ENCODE measurements at regions of chr15 and their contacts with region 1.

Region 1: DNA sequence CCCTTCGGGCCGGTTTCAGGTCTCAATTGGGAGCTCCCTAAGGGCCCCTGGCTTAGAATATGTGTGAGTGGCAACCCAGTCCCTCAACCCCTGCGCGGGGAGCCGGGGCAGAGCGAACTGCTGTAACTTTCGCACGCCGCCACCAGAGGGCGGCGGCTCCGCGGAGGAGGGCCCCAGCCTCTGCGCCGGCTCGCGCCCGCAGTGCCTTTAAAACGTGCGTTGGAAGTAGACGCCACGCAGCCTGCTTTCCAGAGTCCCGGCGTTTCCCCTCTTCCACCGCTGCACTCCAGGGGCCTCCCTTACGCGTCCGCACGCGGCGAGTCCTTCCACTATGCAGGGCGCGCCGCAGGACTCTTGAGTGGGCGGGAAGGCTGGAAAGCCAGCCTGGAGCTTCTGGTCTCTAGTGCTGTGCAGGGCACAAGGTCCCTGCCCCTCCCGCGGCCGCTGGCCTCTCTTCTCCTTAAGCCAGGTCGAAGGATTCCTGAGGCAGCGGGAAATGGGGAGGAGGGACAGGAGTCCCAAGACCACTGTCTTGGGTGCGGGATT is 23.7 kb upstream of the RNU6-1 start:
- DNase-seq: peak; percentile 42 to 94
- H3K4me3 ChIP-seq: peak overlapping the region; percentile 4
- CTCF ChIP-seq: peak in 1 of 3 donors; percentile 87
- POLR2A ChIP-seq: no peak

Region 2: GRCh38 chr15:67796196-67797127 is 67.1 kb before region 1 on chr15:
- intact Hi-C with region 1: no loop called
- DNase-seq: no peak
- H3K4me3 ChIP-seq: no peak overlapping the region
- CTCF ChIP-seq: no peak
- POLR2A ChIP-seq: no peak

Region 3: DNA sequence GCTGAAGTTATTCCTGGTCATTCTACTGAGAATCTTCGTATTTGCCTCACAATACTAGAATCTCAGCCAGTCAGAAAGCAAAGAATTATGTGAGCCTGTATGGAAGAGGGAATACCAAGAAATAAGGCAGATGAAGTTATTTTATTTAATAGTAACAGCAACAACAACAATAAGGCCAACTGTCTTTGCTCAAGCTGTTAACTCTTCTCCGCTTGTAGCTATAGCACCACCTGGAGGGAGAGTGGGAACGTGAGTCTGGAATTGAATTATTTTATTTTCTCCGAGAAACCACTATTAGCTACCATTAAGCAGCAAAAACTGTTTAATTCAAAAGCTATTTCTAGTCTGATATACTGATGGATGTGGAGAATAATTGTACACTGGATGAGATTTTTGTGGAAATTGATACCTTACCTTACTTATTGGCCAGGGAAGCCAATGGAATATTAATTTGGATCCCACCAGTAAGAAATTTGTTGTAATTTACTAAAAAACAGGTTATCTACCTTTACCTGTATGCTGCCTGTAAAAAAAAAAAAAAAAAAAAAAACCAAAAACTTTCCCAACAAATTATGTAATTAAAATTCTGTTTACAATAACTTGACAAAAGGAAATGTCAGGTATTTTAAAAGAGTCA is 291.5 kb after region 1 on chr15:
- intact Hi-C with region 1: loop called (anchors 5 kb)
- DNase-seq: no peak
- H3K4me3 ChIP-seq: no peak overlapping the region
- CTCF ChIP-seq: no peak
- POLR2A ChIP-seq: no peak

Measured in lower leg skin (tissue), 4 donors.